B cell (primary cell): ENCODE measurements at regions of chr6 and their contacts with region 1.

Region 1: GRCh38 chr6:30483677-30484279 is 5.5 kb upstream of the HLA-E start:
- DNase-seq: peak; percentile 76
- ATAC-seq: peak; percentile 23
- H3K4me3 ChIP-seq: no peak overlapping the region
- H3K4me3 Mint-ChIP-seq: no peak overlapping the region
- H3K27ac ChIP-seq: no peak overlapping the region
- H3K27ac Mint-ChIP-seq: no peak overlapping the region
- H3K4me1 ChIP-seq: peaks cover 24 to 28% of the 10 kb centered on the region in 2 donors
- H3K4me1 Mint-ChIP-seq: peaks cover 33% of the 10 kb centered on the region
- H3K27me3 ChIP-seq: peaks cover 0 to 28% (median 21%) of the 10 kb centered on the region in 4 experiments
- H3K27me3 Mint-ChIP-seq: peaks cover 33% of the 10 kb centered on the region
- CTCF ChIP-seq: peak; percentile 84

Region 2: GRCh38 chr6:30463651-30464618 is 19.8 kb before region 1 on chr6:
- CTCF ChIA-PET with region 1: interaction called, 42 read pairs
- POLR2A ChIA-PET with region 1: no interaction called
- intact Hi-C with region 1: no loop called
- DNase-seq: peak; percentile 71
- ATAC-seq: peak; percentile 58
- H3K4me3 ChIP-seq: peak overlapping the region in 4 of 5 experiments; percentile 8 to 41 (median 30)
- H3K4me3 Mint-ChIP-seq: peak overlapping the region; percentile 65
- H3K27ac ChIP-seq: no peak overlapping the region
- H3K27ac Mint-ChIP-seq: no peak overlapping the region
- H3K4me1 ChIP-seq: peaks cover 42% of the 10 kb centered on the region in 2 donors
- H3K4me1 Mint-ChIP-seq: peaks cover 43% of the 10 kb centered on the region
- H3K27me3 ChIP-seq: peaks cover 0 to 90% (median 77%) of the 10 kb centered on the region in 4 experiments
- H3K27me3 Mint-ChIP-seq: peaks cover 74% of the 10 kb centered on the region
- CTCF ChIP-seq: no peak

Region 3: GRCh38 chr6:30508890-30509736 is 25.3 kb after region 1 on chr6:
- CTCF ChIA-PET with region 1: interaction called, 45 read pairs
- POLR2A ChIA-PET with region 1: interaction called, 4 read pairs
- intact Hi-C with region 1: no loop called
- DNase-seq: peak; percentile 84
- ATAC-seq: peak; percentile 62
- H3K4me3 ChIP-seq: peak overlapping the region; percentile 20 to 74 (median 46)
- H3K4me3 Mint-ChIP-seq: peak overlapping the region; percentile 68
- H3K27ac ChIP-seq: peak overlapping the region; percentile 73 to 74
- H3K27ac Mint-ChIP-seq: peak overlapping the region; percentile 84
- H3K4me1 ChIP-seq: peaks cover 76 to 83% of the 10 kb centered on the region in 2 donors
- H3K4me1 Mint-ChIP-seq: peaks cover 67% of the 10 kb centered on the region
- H3K27me3 ChIP-seq: no peaks in the 10 kb centered on the region
- H3K27me3 Mint-ChIP-seq: no peaks in the 10 kb centered on the region
- CTCF ChIP-seq: no peak

Region 4: DNA sequence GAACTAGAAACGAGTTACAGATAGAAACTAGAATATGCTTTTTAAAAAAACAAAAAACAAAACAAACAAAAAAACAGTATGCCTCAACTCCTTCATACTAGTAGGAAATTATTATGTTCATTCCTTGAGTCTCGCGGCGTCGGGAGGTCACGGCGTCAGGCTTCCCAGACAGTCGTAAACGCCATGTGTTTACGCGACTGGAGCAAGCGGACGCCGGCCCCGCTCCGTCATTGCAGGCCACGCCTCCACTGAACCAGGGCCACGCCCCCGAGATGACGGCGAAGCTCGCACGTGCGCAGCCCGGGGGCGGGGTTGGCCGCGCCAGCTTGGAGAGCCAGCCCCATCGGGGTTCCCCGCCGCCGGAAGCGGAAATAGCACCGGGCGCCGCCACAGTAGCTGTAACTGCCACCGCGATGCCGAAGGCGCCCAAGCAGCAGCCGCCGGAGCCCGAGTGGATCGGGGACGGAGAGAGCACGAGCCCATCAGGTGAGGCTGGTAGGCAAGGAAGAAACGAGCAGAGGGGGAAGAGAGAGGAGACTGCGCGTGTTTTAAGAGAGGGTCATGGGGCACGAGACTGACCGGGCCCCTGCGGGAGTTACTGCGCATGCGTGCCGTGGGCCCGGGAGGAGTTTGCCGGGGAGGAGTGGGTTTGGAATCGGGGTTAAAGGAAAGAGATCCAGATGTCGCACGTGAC is 87.4 kb after region 1 on chr6 and contains the start of gene ABCF1:
- CTCF ChIA-PET with region 1: interaction called, 29 read pairs
- POLR2A ChIA-PET with region 1: interaction called, 4 read pairs
- intact Hi-C with region 1: loop called (anchors 1 kb)
- DNase-seq: peak; percentile 99
- ATAC-seq: peak; percentile 98
- H3K4me3 ChIP-seq: peak within 1 kb of the TSS; percentile 69 to 93 (median 87)
- H3K4me3 Mint-ChIP-seq: peak within 1 kb of the TSS; percentile 96
- H3K27ac ChIP-seq: peak within 1 kb of the TSS; percentile 82 to 92
- H3K27ac Mint-ChIP-seq: peak within 1 kb of the TSS; percentile 93
- H3K4me1 ChIP-seq: peaks cover 25 to 32% of the 10 kb centered on the region in 2 donors
- H3K4me1 Mint-ChIP-seq: peaks cover 54% of the 10 kb centered on the region
- H3K27me3 ChIP-seq: no peaks in the 10 kb centered on the region
- H3K27me3 Mint-ChIP-seq: no peaks in the 10 kb centered on the region
- CTCF ChIP-seq: no peak
- total RNA-seq, gene ABCF1: 60.9 and 63.7 TPM in 2 replicates

Region 5: GRCh38 chr6:30600451-30600961 is 116.7 kb after region 1 on chr6:
- CTCF ChIA-PET with region 1: interaction called, 295 read pairs
- POLR2A ChIA-PET with region 1: interaction called, 11 read pairs
- intact Hi-C with region 1: no loop called
- DNase-seq: no peak
- ATAC-seq: no peak
- H3K4me3 ChIP-seq: no peak overlapping the region
- H3K4me3 Mint-ChIP-seq: no peak overlapping the region
- H3K27ac ChIP-seq: no peak overlapping the region
- H3K27ac Mint-ChIP-seq: no peak overlapping the region
- H3K4me1 ChIP-seq: peaks cover 0 to 6% of the 10 kb centered on the region in 2 donors
- H3K4me1 Mint-ChIP-seq: peaks cover 6% of the 10 kb centered on the region
- H3K27me3 ChIP-seq: no peaks in the 10 kb centered on the region
- H3K27me3 Mint-ChIP-seq: no peaks in the 10 kb centered on the region
- CTCF ChIP-seq: no peak

Region 6: DNA sequence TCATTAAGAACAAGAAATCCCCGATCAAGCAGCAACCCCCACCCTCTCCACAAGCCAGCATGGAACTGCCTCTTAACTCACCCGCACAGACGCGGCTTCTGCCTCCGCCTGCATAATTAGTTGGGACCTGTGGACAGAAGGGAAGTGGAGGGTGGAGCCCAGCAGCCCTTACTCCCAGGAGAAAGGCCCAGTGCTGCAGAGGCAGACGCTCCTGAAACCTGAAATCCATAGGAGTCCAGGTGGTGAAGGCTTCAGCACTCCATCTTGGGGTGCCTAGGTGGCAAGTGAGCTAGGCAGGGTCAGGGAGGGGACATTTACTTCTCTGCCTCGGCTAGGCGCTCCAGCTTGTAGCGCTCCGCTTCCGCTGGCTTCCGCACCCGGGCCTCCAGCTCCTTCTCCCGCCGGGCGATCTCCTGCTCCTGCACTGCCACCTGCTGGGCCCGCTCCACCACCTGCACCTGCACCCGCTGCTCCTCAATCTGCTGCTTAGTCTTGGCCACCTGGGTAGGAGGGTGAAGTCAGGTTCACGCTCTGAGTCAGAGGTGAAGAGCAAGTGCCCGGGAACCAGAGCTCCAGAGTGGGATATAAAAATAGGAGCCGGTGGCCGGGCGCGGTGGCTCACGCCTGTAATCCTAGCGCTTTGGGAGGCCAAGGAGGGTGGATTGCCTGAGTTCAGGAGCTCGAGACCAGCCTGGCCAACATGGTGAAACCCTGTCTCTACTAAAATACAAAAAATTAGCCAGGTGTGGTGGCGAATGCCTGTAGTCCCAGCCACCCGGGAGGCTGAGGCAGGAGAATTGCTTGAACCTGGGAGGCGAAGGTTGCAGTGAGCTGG is 247.0 kb after region 1 on chr6:
- CTCF ChIA-PET with region 1: interaction called, 51 read pairs
- POLR2A ChIA-PET with region 1: interaction called, 3 read pairs
- intact Hi-C with region 1: loop called (anchors 2 kb)
- DNase-seq: peak; percentile 86
- ATAC-seq: peak; percentile 89
- H3K4me3 ChIP-seq: peak overlapping the region in 3 of 5 experiments; percentile 5 to 29 (median 25)
- H3K4me3 Mint-ChIP-seq: peak overlapping the region; percentile 40
- H3K27ac ChIP-seq: no peak overlapping the region
- H3K27ac Mint-ChIP-seq: peak overlapping the region; percentile 42
- H3K4me1 ChIP-seq: peaks cover 22 to 23% of the 10 kb centered on the region in 2 donors
- H3K4me1 Mint-ChIP-seq: peaks cover 25% of the 10 kb centered on the region
- H3K27me3 ChIP-seq: no peaks in the 10 kb centered on the region
- H3K27me3 Mint-ChIP-seq: no peaks in the 10 kb centered on the region
- CTCF ChIP-seq: peak; percentile 77